PC-3 (cell line): ENCODE measurements at regions of chr12 and their contacts with region 1.

Region 1: GRCh38 chr12:27332407-27333301 is at the start of gene BMAL2:
- DNase-seq: peak; percentile 79
- ATAC-seq: peak; percentile 6
- H3K4me3 ChIP-seq: peak within 1 kb of the TSS; percentile 83
- H3K27ac ChIP-seq: peak within 1 kb of the TSS; percentile 95
- H3K4me1 ChIP-seq: peaks cover 65% of the 10 kb centered on the region
- H3K27me3 ChIP-seq: no peaks in the 10 kb centered on the region
- CTCF ChIP-seq: no peak
- total RNA-seq, gene BMAL2: 126 and 137 TPM in 2 replicates

Region 2: GRCh38 chr12:27277846-27278260 is 54.8 kb before region 1 on chr12:
- CTCF ChIA-PET with region 1: no interaction called
- POLR2A ChIA-PET with region 1: no interaction called
- intact Hi-C with region 1: no loop called
- DNase-seq: peak; percentile 83
- ATAC-seq: peak; percentile 74
- H3K4me3 ChIP-seq: no peak overlapping the region
- H3K27ac ChIP-seq: peak overlapping the region; percentile 21; the same call in 1 of the 2 replicates
- H3K4me1 ChIP-seq: peaks cover 15% of the 10 kb centered on the region
- H3K27me3 ChIP-seq: no peaks in the 10 kb centered on the region
- CTCF ChIP-seq: no peak

Region 3: DNA sequence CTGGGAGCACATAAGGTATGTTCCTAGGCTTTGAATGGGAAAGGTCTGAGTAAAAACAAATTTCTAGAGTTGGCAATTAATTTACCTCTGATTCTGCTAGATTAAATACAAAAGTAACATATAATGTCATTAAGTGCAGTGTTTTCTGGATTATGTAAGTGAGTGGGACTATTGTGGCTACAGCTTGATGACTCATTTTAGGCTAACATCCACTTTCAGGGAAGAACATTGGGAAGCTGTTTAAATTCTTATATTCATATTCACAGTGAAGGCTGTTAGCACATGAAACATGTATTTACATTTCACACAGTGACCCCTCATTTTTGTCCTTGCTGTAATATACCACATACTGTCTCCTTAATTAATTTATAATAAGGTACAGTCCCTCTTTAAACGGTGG is 13.2 kb before region 1 on chr12:
- CTCF ChIA-PET with region 1: no interaction called
- POLR2A ChIA-PET with region 1: interaction called, 11 read pairs
- intact Hi-C with region 1: loop called (anchors 1 kb)
- DNase-seq: peak; percentile 81
- ATAC-seq: peak; percentile 58
- H3K4me3 ChIP-seq: no peak overlapping the region
- H3K27ac ChIP-seq: peak overlapping the region; percentile 70
- H3K4me1 ChIP-seq: peaks cover 52% of the 10 kb centered on the region
- H3K27me3 ChIP-seq: no peaks in the 10 kb centered on the region
- CTCF ChIP-seq: no peak

Region 4: DNA sequence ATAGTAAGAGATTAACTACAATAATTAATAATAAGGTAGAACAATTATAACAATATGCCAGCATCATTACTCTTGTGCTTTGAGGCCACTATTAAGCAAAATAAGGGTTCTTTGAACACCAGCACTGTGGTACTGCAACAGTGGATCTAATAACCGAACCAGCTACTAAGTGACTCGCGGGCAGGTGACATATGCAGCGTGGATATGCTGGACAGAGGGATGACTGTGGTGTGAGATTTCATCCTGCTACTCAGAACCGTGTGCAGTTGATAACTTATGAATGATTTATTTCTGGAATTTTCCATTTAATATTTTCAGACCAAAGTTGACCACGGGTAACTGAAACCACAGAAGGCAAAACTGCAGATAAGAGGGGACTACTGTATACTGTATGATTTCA is 34.4 kb after region 1 on chr12:
- CTCF ChIA-PET with region 1: no interaction called
- POLR2A ChIA-PET with region 1: interaction called, 4 read pairs
- intact Hi-C with region 1: loop called (anchors 2 kb)
- DNase-seq: peak; percentile 37
- ATAC-seq: peak; percentile 63
- H3K4me3 ChIP-seq: no peak overlapping the region
- H3K27ac ChIP-seq: peak overlapping the region; percentile 39
- H3K4me1 ChIP-seq: peaks cover 22% of the 10 kb centered on the region
- H3K27me3 ChIP-seq: no peaks in the 10 kb centered on the region
- CTCF ChIP-seq: no peak

Region 5: DNA sequence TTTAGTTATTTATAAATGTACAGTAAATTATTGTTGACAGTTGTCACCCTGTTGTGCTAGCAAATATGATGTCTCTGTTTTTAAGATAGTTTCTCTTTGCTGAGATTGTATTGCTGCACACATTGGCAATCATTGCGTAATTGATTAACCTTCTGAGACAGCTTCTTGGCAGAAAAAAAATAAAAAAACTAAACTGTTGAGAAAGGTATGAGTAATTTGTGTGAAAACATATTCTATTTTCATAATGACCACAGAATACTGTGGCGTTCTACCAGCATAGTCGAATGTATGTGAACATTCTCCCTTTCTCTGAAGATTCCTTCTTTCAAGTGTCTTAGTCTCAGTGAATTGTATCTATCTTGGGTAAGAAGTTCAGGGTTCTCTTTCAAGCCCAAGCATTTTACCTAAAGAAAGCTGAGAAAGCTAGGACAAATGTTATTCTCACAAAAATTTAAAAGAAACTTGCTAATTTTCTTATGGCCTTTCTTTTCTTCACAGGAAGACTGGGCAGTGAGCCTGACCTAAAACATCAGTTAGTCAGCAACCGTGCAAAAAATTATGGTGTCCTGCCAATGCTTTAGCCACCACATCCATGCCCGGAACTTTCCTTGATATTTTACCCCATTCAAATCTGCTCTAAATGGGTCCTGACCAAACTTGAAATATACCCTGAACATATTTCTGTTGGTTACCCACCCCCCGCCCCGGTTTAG is 294.6 kb after region 1 on chr12:
- CTCF ChIA-PET with region 1: no interaction called
- POLR2A ChIA-PET with region 1: no interaction called
- intact Hi-C with region 1: loop called (anchors 5 kb)
- DNase-seq: peak; percentile 87
- ATAC-seq: peak; percentile 56
- H3K4me3 ChIP-seq: peak overlapping the region; percentile 24; the same call in 1 of the 2 replicates
- H3K27ac ChIP-seq: peak overlapping the region; percentile 86
- H3K4me1 ChIP-seq: peaks cover 58% of the 10 kb centered on the region
- H3K27me3 ChIP-seq: no peaks in the 10 kb centered on the region
- CTCF ChIP-seq: no peak

Region 6: GRCh38 chr12:27703710-27704452 is 371.2 kb after region 1 on chr12:
- CTCF ChIA-PET with region 1: interaction called, 5 read pairs
- POLR2A ChIA-PET with region 1: no interaction called
- intact Hi-C with region 1: loop called (anchors 5 kb)
- DNase-seq: peak; percentile 98
- ATAC-seq: peak; percentile 99
- H3K4me3 ChIP-seq: no peak overlapping the region
- H3K27ac ChIP-seq: no peak overlapping the region
- H3K4me1 ChIP-seq: no peaks in the 10 kb centered on the region
- H3K27me3 ChIP-seq: no peaks in the 10 kb centered on the region
- CTCF ChIP-seq: peak; percentile 99; the same call in 1 of the 2 replicates